Caco-2 (cell line): ENCODE measurements at regions of chr4 and their contacts with region 1.

Region 1: DNA sequence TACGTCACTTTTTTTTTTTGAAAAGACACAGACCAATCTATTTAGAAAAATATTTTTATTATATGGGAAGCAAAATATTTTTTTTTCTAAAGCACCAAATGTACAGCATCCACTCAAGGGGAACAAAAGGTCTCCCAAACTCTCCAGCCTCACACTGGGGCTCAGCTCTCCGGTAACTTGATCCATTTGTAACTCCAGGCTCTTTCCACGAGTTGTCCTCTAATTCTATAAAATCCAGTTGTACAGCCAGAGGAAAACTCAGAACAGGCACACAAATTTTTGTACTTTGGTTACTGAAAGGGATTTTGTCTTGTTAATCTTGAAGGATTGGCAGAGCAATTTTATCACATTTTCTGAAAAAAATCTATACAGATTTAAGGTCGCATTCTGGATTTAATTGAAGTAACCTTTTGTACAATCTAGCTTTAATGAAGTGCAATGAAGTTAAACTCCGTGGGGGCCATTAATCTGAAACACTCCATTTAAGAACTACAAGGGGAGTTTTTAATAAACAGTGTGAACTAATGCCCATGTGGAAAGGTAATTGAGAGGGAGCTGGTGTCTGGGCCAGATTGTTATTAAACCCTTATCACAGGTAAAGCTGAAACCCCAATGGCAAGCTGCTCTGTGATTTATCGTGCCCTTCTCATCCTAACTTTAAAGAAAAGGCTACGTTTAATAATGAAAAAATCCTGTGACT is 161.2 kb upstream of the FRG1 start:
- DNase-seq: no peak
- H3K4me3 ChIP-seq: no peak overlapping the region
- H3K4me3 Mint-ChIP-seq: no peak overlapping the region
- H3K27ac Mint-ChIP-seq: no peak overlapping the region
- H3K4me1 ChIP-seq: no peaks in the 10 kb centered on the region
- H3K4me1 Mint-ChIP-seq: no peaks in the 10 kb centered on the region
- H3K27me3 ChIP-seq: no peaks in the 10 kb centered on the region
- H3K27me3 Mint-ChIP-seq: peaks cover 10% of the 10 kb centered on the region
- CTCF ChIP-seq: no peak

Region 2: GRCh38 chr4:189533603-189534002 is 245.8 kb before region 1 on chr4:
- CTCF ChIA-PET with region 1: no interaction called
- POLR2A ChIA-PET with region 1: interaction called, 22 read pairs
- intact Hi-C with region 1: no loop called
- DNase-seq: no peak
- H3K4me3 ChIP-seq: no peak overlapping the region
- H3K4me3 Mint-ChIP-seq: no peak overlapping the region
- H3K27ac Mint-ChIP-seq: no peak overlapping the region
- H3K4me1 ChIP-seq: no peaks in the 10 kb centered on the region
- H3K4me1 Mint-ChIP-seq: no peaks in the 10 kb centered on the region
- H3K27me3 ChIP-seq: no peaks in the 10 kb centered on the region
- H3K27me3 Mint-ChIP-seq: no peaks in the 10 kb centered on the region
- CTCF ChIP-seq: no peak